ENCODE measurements at regions of chr18 and their contacts with region 1.

Region 1: DNA sequence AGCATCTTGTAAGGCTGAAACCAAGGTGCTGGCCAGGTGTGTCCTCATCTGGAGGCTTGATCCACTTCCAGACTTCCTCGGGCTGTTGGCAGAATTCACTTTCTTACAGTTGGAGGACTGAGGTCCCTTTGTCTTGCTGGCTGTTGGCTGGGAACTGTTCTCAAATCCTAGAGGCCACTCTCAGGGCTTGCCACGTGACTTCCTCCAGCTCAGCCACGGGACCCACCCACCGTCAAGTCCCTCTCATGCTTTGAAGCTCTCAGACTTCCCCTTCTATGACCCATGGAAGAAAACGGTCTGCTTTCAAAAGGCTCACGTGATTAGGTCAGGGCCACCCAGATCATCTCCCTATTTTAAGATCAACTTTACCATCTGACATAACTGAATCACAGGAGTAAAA is 77.1 kb downstream of the SMAD4 start:
- DNase-seq: no peak
- H3K4me3 ChIP-seq: no peak overlapping the region
- H3K27ac ChIP-seq: no peak overlapping the region
- H3K4me1 ChIP-seq: no peaks in the 10 kb centered on the region
- H3K27me3 ChIP-seq: no peaks in the 10 kb centered on the region
- CTCF ChIP-seq: no peak
- EP300 ChIP-seq: no peak
- POLR2A ChIP-seq: no peak

Region 2: GRCh38 chr18:49723648-49724180 is 1383.4 kb before region 1 on chr18:
- intact Hi-C with region 1: loop called in 1 of 4 experiments (anchors 5 kb)
- DNase-seq: no peak
- H3K4me3 ChIP-seq: no peak overlapping the region
- H3K27ac ChIP-seq: no peak overlapping the region
- H3K4me1 ChIP-seq: no peaks in the 10 kb centered on the region
- H3K27me3 ChIP-seq: no peaks in the 10 kb centered on the region
- CTCF ChIP-seq: no peak
- EP300 ChIP-seq: no peak
- POLR2A ChIP-seq: no peak

Region 3: GRCh38 chr18:49988733-49989132 is 1118.3 kb before region 1 on chr18:
- intact Hi-C with region 1: no loop called
- DNase-seq: no peak
- H3K4me3 ChIP-seq: no peak overlapping the region
- H3K27ac ChIP-seq: no peak overlapping the region
- H3K4me1 ChIP-seq: no peaks in the 10 kb centered on the region
- H3K27me3 ChIP-seq: no peaks in the 10 kb centered on the region
- CTCF ChIP-seq: no peak
- EP300 ChIP-seq: no peak
- POLR2A ChIP-seq: no peak

Region 4: GRCh38 chr18:51824746-51825145 is 717.7 kb after region 1 on chr18:
- intact Hi-C with region 1: no loop called
- DNase-seq: no peak
- H3K4me3 ChIP-seq: no peak overlapping the region
- H3K27ac ChIP-seq: no peak overlapping the region
- H3K4me1 ChIP-seq: no peaks in the 10 kb centered on the region
- H3K27me3 ChIP-seq: no peaks in the 10 kb centered on the region
- CTCF ChIP-seq: no peak
- EP300 ChIP-seq: no peak
- POLR2A ChIP-seq: no peak